ENCODE measurements at regions of chr11 and their contacts with region 1.

Region 1: GRCh38 chr11:73350908-73351636 is 25.1 kb upstream of the RELT start:
- DNase-seq: peak; percentile 70
- H3K4me3 Mint-ChIP-seq: no peak overlapping the region
- H3K27ac Mint-ChIP-seq: no peak overlapping the region
- H3K4me1 Mint-ChIP-seq: peaks cover 27% of the 10 kb centered on the region
- H3K27me3 Mint-ChIP-seq: peaks cover 3% of the 10 kb centered on the region

Region 2: GRCh38 chr11:73307323-73308002 is 43.6 kb before region 1 on chr11:
- CTCF ChIA-PET with region 1: interaction called, 21 read pairs
- POLR2A ChIA-PET with region 1: no interaction called
- DNase-seq: peak; percentile 89
- H3K4me3 Mint-ChIP-seq: peak overlapping the region; percentile 83
- H3K27ac Mint-ChIP-seq: no peak overlapping the region
- H3K4me1 Mint-ChIP-seq: peaks cover 8% of the 10 kb centered on the region
- H3K27me3 Mint-ChIP-seq: peaks cover 44% of the 10 kb centered on the region

Region 3: GRCh38 chr11:73335204-73335923 is 15.7 kb before region 1 on chr11:
- CTCF ChIA-PET with region 1: interaction called, 59 read pairs
- POLR2A ChIA-PET with region 1: no interaction called
- DNase-seq: peak; percentile 75
- H3K4me3 Mint-ChIP-seq: no peak overlapping the region
- H3K27ac Mint-ChIP-seq: no peak overlapping the region
- H3K4me1 Mint-ChIP-seq: no peaks in the 10 kb centered on the region
- H3K27me3 Mint-ChIP-seq: peaks cover 7% of the 10 kb centered on the region

Region 4: DNA sequence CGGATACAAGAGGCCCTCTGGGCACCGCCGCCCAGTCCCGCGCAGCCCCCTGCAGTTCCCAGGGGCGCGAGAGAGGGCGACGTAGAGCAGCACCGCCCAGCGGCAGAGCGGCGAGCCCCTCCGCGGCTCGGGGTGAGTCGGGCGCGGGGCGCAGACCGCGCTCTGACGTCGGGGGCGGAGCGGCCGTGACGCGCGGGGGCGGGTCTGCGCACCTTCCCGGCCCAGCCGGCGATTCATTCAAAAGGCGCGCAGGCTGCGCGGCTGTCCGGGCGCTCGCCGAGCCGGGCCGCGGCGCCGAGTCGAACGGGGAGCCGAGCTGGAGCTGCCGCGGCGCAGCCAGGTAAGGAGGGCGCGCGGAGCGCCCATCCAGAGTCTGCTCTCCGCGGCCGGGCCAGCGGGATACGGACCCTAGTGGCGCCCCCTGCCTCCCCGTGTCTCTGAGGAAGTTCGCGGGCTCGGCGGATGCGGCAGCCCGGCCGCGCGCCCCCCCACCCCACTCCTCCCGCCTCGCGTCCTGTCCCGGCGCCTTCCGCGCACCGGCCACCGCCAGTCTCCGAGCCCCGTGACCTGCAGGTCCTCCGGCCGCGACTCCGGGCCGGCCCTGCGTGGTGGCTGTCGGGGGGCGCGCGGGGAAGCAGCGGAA is 25.2 kb after region 1 on chr11 and contains the start of gene RELT:
- CTCF ChIA-PET with region 1: interaction called, 31 read pairs
- POLR2A ChIA-PET with region 1: interaction called, 10 read pairs
- DNase-seq: peak; percentile 95
- H3K4me3 Mint-ChIP-seq: peak within 1 kb of the TSS; percentile 94
- H3K27ac Mint-ChIP-seq: peak within 1 kb of the TSS; percentile 94
- H3K4me1 Mint-ChIP-seq: peaks cover 48% of the 10 kb centered on the region
- H3K27me3 Mint-ChIP-seq: no peaks in the 10 kb centered on the region
- total RNA-seq, gene RELT: 26.0 to 27.3 TPM

Region 5: GRCh38 chr11:73393479-73394380 is 42.7 kb after region 1 on chr11:
- CTCF ChIA-PET with region 1: interaction called, 106 read pairs
- POLR2A ChIA-PET with region 1: interaction called, 18 read pairs
- DNase-seq: peak; percentile 71
- H3K4me3 Mint-ChIP-seq: no peak overlapping the region
- H3K27ac Mint-ChIP-seq: no peak overlapping the region
- H3K4me1 Mint-ChIP-seq: peaks cover 10% of the 10 kb centered on the region
- H3K27me3 Mint-ChIP-seq: no peaks in the 10 kb centered on the region

Region 6: GRCh38 chr11:73414977-73415651 is 64.0 kb after region 1 on chr11:
- CTCF ChIA-PET with region 1: interaction called, 12 read pairs
- POLR2A ChIA-PET with region 1: no interaction called
- DNase-seq: no peak
- H3K4me3 Mint-ChIP-seq: no peak overlapping the region
- H3K27ac Mint-ChIP-seq: no peak overlapping the region
- H3K4me1 Mint-ChIP-seq: peaks cover 7% of the 10 kb centered on the region
- H3K27me3 Mint-ChIP-seq: no peaks in the 10 kb centered on the region

Measured in activated CD4-positive, alpha-beta memory T cell treated with anti-CD3 and anti-CD28 coated beads, Interleukin-2, amount 10 ng/mL, durations not matched to agents 7 days and 5 days (primary cell).